Activated CD4-positive, alpha-beta T cell treated with anti-CD3 and anti-CD28 coated beads, Interleukin-2, amount 10 ng/mL, durations not matched to agents 24 days and 14 days (primary cell): ENCODE measurements at regions of chr9 and their contacts with region 1.

Region 1: GRCh38 chr9:91150998-91151717 is 210.6 kb downstream of the AUH start:
- DNase-seq: peak; percentile 91
- H3K4me3 Mint-ChIP-seq: peak overlapping the region; percentile 61
- H3K27ac Mint-ChIP-seq: peak overlapping the region; percentile 98
- H3K4me1 Mint-ChIP-seq: peaks cover 82% of the 10 kb centered on the region
- H3K27me3 Mint-ChIP-seq: no peaks in the 10 kb centered on the region

Region 2: DNA sequence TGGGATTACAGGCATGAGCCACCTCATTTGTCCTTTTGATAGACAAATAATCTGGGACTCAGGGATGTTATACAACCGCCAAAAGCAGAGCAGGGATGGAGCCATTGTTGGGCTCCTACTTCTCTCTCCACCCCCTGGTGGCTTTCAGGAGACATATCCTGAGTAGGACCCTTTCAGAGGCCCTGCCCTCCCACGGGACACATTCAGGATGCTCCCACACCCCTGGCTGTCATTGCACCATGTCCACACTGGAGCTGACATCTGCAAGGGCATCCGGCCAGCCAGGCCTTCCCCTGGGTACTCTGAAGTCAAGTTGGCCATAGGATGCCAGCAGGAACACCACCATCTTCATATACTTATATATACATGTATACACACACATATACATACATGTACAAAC is 167.8 kb before region 1 on chr9:
- intact Hi-C with region 1: loop called (anchors 5 kb)
- DNase-seq: no peak
- H3K4me3 Mint-ChIP-seq: no peak overlapping the region
- H3K27ac Mint-ChIP-seq: no peak overlapping the region
- H3K4me1 Mint-ChIP-seq: peaks cover 10% of the 10 kb centered on the region
- H3K27me3 Mint-ChIP-seq: peaks cover 3% of the 10 kb centered on the region

Region 3: DNA sequence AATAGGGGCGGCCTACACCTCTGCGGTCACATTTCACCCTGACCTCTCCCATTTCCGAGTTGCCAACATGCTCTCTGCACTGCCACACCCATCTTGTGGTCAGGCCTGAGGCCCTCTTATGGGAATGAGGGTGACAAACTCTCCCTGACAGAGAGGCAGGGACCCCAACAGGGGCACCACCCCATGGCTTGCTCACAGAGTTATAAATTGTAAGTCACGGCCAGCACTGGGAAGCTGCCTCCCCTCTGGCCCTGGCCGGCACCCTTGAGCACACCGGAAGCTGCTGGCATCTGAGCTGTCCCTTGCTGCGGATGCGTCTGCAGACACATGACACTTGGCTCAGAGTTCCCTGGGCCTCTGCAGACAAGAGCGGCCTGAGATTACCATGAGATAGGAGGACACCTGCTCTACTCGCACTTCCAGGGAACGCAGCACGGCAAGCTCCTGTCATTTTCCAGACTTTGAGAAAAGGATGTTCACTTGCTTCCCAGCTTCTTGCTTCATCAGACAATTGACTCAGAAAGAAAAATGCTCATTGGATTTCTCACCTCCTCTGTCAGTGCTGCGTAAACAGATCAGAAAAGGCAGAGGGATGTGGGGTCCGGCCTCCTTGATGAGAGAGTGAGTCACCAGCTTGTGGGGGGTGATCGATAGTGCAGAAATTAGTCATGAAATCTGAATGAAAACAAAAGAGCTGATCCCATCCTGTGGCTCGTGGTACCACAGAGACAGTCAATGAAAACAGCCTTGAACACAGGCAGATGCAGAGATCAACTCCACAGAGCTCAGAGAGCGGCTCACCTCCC is 79.8 kb before region 1 on chr9:
- intact Hi-C with region 1: loop called (anchors 1 kb)
- DNase-seq: peak; percentile 84
- H3K4me3 Mint-ChIP-seq: peak overlapping the region; percentile 50
- H3K27ac Mint-ChIP-seq: peak overlapping the region; percentile 96
- H3K4me1 Mint-ChIP-seq: peaks cover 17% of the 10 kb centered on the region
- H3K27me3 Mint-ChIP-seq: no peaks in the 10 kb centered on the region

Region 4: GRCh38 chr9:91106415-91107081 is 44.6 kb before region 1 on chr9:
- intact Hi-C with region 1: no loop called
- DNase-seq: no peak
- H3K4me3 Mint-ChIP-seq: no peak overlapping the region
- H3K27ac Mint-ChIP-seq: no peak overlapping the region
- H3K4me1 Mint-ChIP-seq: peaks cover 31% of the 10 kb centered on the region
- H3K27me3 Mint-ChIP-seq: no peaks in the 10 kb centered on the region

Region 5: DNA sequence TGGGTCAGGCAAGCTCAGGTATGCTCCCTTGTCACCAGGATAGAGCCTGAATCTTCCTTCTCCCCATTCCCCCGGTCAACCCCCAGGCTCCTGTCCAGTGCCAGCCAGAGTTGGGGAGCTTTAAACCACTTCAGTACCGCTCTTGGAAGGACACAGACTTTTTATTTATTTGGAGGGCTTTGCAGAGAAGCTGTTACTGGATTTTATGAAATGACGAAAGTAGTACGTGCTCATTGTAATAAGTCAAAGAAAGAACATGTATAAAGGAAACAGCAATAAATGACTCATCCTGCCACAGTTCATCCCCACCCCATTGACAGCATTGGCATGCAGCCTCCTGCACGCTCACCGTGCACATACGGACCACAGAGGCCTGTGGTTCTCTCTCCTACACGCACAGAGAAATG is 19.7 kb before region 1 on chr9:
- intact Hi-C with region 1: loop called (anchors 1 kb)
- DNase-seq: peak; percentile 93
- H3K4me3 Mint-ChIP-seq: peak overlapping the region; percentile 69
- H3K27ac Mint-ChIP-seq: peak overlapping the region; percentile 93
- H3K4me1 Mint-ChIP-seq: peaks cover 45% of the 10 kb centered on the region
- H3K27me3 Mint-ChIP-seq: no peaks in the 10 kb centered on the region

Region 6: GRCh38 chr9:91177661-91178280 is 26.6 kb after region 1 on chr9:
- intact Hi-C with region 1: loop called (anchors 1 kb)
- DNase-seq: peak; percentile 81
- H3K4me3 Mint-ChIP-seq: peak overlapping the region; percentile 56
- H3K27ac Mint-ChIP-seq: peak overlapping the region; percentile 98
- H3K4me1 Mint-ChIP-seq: peaks cover 58% of the 10 kb centered on the region
- H3K27me3 Mint-ChIP-seq: no peaks in the 10 kb centered on the region

Region 7: DNA sequence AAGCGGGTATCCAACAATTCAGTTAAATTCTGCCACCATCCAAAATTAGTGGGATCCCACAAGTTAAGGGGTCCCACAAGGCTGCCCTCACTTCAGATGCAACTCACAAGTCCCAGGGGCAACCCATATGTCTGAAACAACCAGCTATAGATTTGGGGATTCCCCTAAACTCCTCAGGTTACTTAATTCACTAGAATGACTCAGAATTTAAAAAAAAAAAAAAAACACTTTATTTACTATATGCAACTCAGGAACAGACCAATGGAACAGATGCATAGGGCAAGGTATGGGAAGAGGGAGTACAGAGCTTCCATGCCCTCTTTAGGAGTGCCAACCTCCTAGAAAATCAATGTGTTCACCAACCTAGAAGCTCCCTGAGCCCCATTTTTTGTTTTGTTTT is 195.5 kb after region 1 on chr9:
- intact Hi-C with region 1: loop called (anchors 1 kb)
- DNase-seq: peak; percentile 69
- H3K4me3 Mint-ChIP-seq: no peak overlapping the region
- H3K27ac Mint-ChIP-seq: peak overlapping the region; percentile 49
- H3K4me1 Mint-ChIP-seq: peaks cover 40% of the 10 kb centered on the region
- H3K27me3 Mint-ChIP-seq: no peaks in the 10 kb centered on the region

Region 8: GRCh38 chr9:91422758-91423711 is 271.9 kb after region 1 on chr9:
- intact Hi-C with region 1: loop called (anchors 1 kb)
- DNase-seq: peak; percentile 89
- H3K4me3 Mint-ChIP-seq: peak overlapping the region; percentile 100
- H3K27ac Mint-ChIP-seq: peak overlapping the region; percentile 98
- H3K4me1 Mint-ChIP-seq: peaks cover 57% of the 10 kb centered on the region
- H3K27me3 Mint-ChIP-seq: no peaks in the 10 kb centered on the region